GM12878 (cell line): ENCODE measurements at regions of chr9 and their contacts with region 1.

Region 1: DNA sequence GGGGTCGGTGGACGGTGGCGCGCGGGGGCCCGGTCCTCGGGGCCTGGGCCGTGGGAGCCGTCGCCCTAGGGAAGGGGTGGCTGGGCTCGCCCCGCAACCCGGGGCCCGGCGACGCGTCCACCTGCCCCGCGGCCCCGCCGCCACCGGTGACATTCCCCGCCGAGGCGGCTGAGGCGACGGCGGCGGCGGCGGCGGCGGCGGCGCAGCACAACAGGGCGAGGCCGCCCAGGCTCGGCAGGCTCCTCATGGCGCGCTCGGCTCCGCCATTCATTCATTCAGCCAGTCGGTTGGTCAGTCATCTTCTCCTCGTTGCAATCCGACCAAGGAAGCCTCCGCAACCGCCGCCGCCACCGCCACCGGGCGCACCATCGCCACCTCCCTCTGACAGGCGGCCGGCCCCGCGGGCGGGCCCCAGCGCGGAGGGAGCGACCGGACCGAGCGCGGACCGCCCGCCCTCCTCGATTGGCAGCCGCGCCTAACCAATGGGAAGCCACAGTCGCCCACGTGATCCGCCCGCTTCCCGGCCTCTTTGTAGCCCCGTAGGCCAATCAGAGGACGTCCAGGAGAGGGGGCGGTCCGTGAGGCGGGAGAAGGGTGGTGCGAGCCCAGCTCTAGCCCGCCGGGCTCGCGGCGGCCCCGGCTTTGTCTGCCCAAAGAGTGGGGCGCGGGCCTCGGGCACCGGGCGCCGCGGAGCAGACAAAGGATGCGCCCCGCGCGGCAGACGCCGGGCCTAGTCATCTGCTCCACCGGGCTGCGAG is at the start of gene MEGF9:
- DNase-seq: peak; percentile 81
- ATAC-seq: peak; percentile 99
- H3K4me3 ChIP-seq: peak within 1 kb of the TSS; percentile 80
- H3K27ac ChIP-seq: no peak within 1 kb of the TSS; the same call in none of the 2 replicates
- H3K4me1 ChIP-seq: peaks cover 15% of the 10 kb centered on the region
- H3K27me3 ChIP-seq: no peaks in the 10 kb centered on the region
- CTCF ChIP-seq: no peak
- EP300 ChIP-seq: no peak
- POLR2A ChIP-seq: peak; percentile 83
- RAD21 ChIP-seq: no peak
- polyA plus RNA-seq, gene MEGF9: 1.4 to 1.6 TPM

Region 2: GRCh38 chr9:120619751-120620655 is 94.3 kb before region 1 on chr9:
- CTCF ChIA-PET with region 1: no interaction called
- POLR2A ChIA-PET with region 1: no interaction called
- RAD21 ChIA-PET with region 1: no interaction called
- SMC1A ChIA-PET with region 1: no interaction called
- in situ Hi-C with region 1: no loop called
- intact Hi-C with region 1: loop called (anchors 5 kb)
- DNase-seq: peak; percentile 16
- ATAC-seq: peak; percentile 97
- H3K4me3 ChIP-seq: no peak overlapping the region
- H3K27ac ChIP-seq: no peak overlapping the region
- H3K4me1 ChIP-seq: no peaks in the 10 kb centered on the region
- H3K27me3 ChIP-seq: no peaks in the 10 kb centered on the region
- CTCF ChIP-seq: peak; percentile 69 to 78 (median 75)
- EP300 ChIP-seq: no peak
- POLR2A ChIP-seq: no peak
- RAD21 ChIP-seq: peak; percentile 78

Region 3: DNA sequence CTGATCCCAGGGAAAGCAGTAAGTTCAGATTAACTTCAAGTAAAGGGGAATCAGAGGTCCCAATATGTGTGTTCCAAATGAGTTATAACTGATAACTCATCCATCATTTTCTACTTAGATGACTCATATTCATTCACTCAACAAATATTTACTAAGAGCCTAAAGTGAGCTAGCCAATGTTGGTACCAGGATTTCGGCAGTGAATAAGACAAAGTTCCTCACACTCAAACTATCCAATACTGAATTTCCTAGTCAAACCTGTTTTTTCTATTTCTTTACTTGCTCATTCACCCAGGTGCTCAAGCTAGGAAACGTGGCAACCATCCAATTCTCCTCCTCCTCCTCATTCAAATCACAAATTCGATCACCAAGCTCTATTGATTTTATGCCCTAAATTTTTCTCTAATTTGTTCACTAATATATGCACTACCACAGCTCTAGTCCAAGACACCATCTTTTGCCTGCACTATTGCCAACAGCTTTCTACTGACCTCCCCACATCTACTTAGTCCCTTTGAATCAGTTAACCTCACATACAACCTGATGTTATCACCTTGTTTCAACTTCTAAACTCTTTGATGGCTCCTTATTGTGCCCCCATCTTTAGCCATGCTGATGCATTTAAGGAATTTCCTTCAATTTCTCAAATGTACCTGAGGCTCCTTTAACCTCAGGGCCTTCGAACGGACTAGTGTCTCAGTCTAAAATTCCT is 53.3 kb after region 1 on chr9:
- CTCF ChIA-PET with region 1: no interaction called
- POLR2A ChIA-PET with region 1: no interaction called
- RAD21 ChIA-PET with region 1: no interaction called
- SMC1A ChIA-PET with region 1: no interaction called
- in situ Hi-C with region 1: no loop called
- intact Hi-C with region 1: no loop called
- DNase-seq: no peak
- ATAC-seq: no peak
- H3K4me3 ChIP-seq: no peak overlapping the region
- H3K27ac ChIP-seq: no peak overlapping the region
- H3K4me1 ChIP-seq: no peaks in the 10 kb centered on the region
- H3K27me3 ChIP-seq: no peaks in the 10 kb centered on the region
- CTCF ChIP-seq: no peak
- EP300 ChIP-seq: no peak
- POLR2A ChIP-seq: no peak
- RAD21 ChIP-seq: no peak